CD8-positive, alpha-beta T cell (primary cell): ENCODE measurements at regions of chr4 and their contacts with region 1.

Region 1: DNA sequence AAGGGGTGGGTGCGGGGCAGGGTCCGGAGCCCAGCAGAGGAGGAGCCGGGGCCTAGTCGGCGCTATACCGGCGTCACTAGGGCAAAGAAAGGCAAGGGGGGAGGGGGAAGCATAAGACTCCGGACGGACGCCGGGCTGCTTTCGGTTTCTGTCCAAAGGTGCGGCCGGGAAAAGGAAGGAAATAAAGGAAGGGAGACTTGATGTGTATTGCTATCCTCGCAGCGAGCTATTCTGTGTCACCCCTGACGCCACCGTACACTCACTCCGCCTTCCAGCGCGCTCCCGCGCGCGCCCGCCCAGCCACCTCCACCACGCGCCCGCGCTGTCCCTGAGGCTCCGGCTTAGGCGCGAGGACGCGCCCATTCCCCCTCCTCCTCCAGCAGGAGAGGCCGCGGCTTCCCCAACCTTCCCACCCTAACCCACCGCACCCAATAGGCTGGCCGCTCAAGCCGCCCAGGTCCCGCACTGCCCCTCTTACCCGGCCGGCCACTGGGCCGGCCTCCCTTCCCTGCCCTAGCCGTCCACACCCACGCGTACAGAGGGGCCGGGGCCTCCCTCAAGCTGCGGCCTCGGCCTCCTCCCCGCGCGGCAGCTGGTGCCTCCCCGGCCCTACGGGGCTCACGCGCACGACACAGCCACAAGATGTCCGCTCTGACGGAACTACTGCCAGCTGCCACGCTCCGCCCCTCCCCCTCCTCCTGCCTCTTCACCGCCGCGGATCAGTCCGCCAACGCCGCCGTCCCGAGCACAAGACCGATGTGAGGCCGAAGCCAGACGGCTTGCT is at the start of gene UBE2D3:
- DNase-seq: peak; percentile 90 to 98 (median 95)
- ATAC-seq: peak; percentile 49
- H3K4me3 ChIP-seq: peak within 1 kb of the TSS; percentile 80 to 90
- H3K4me3 Mint-ChIP-seq: no peak within 1 kb of the TSS
- H3K27ac ChIP-seq: peak within 1 kb of the TSS; percentile 99 to 100
- H3K27ac Mint-ChIP-seq: no peak within 1 kb of the TSS
- H3K4me1 ChIP-seq: peaks cover 37% of the 10 kb centered on the region
- H3K4me1 Mint-ChIP-seq: peaks cover 39% of the 10 kb centered on the region
- H3K27me3 ChIP-seq: no peaks in the 10 kb centered on the region
- H3K27me3 Mint-ChIP-seq: no peaks in the 10 kb centered on the region
- CTCF ChIP-seq: no peak
- total RNA-seq, gene UBE2D3: 752 to 758 TPM

Region 2: DNA sequence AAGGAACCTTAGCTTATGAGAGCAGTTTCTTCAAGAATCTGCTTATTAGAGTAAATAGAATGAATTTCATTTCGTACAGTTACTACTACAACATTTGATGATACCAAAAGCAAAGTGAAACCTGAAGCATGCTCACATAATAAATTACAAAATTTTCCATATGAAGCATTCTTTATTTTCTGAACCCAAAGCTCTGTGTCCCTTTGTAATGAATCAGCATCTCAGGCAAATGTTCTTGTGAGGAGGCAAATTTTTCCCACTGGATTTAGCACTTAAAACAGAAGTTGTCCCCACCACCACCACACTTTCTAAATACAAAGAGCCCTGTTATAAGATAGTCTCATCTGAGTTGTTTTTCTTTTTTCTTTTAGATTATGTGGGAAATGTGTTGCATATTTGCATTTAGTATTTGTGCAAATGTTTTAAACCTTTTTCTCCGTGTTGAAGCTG is 396.6 kb before region 1 on chr4:
- CTCF ChIA-PET with region 1: no interaction called
- POLR2A ChIA-PET with region 1: no interaction called
- intact Hi-C with region 1: loop called in 1 of 2 experiments (anchors 1 kb)
- DNase-seq: peak in 1 of 9 experiments; percentile 19
- ATAC-seq: no peak
- H3K4me3 ChIP-seq: peak overlapping the region; percentile 57 to 58
- H3K4me3 Mint-ChIP-seq: peak overlapping the region; percentile 88
- H3K27ac ChIP-seq: peak overlapping the region; percentile 34 to 55
- H3K27ac Mint-ChIP-seq: no peak overlapping the region
- H3K4me1 ChIP-seq: peaks cover 4% of the 10 kb centered on the region
- H3K4me1 Mint-ChIP-seq: peaks cover 8% of the 10 kb centered on the region
- H3K27me3 ChIP-seq: no peaks in the 10 kb centered on the region
- H3K27me3 Mint-ChIP-seq: no peaks in the 10 kb centered on the region
- CTCF ChIP-seq: no peak

Region 3: GRCh38 chr4:102760645-102761295 is 66.3 kb before region 1 on chr4 and contains the start of gene MANBA:
- CTCF ChIA-PET with region 1: interaction called, 9 read pairs
- POLR2A ChIA-PET with region 1: interaction called, 71 read pairs
- intact Hi-C with region 1: loop called (anchors 1 to 2 kb)
- DNase-seq: peak; percentile 67 to 90 (median 84)
- ATAC-seq: peak; percentile 83
- H3K4me3 ChIP-seq: peak within 1 kb of the TSS; percentile 88 to 93
- H3K4me3 Mint-ChIP-seq: peak within 1 kb of the TSS; percentile 96
- H3K27ac ChIP-seq: peak within 1 kb of the TSS; percentile 62 to 65
- H3K27ac Mint-ChIP-seq: peak within 1 kb of the TSS; percentile 94
- H3K4me1 ChIP-seq: peaks cover 10% of the 10 kb centered on the region
- H3K4me1 Mint-ChIP-seq: peaks cover 42% of the 10 kb centered on the region
- H3K27me3 ChIP-seq: no peaks in the 10 kb centered on the region
- H3K27me3 Mint-ChIP-seq: no peaks in the 10 kb centered on the region
- CTCF ChIP-seq: no peak
- total RNA-seq, gene MANBA: 22.5 to 24.1 TPM

Region 4: GRCh38 chr4:102778720-102779119 is 48.4 kb before region 1 on chr4:
- CTCF ChIA-PET with region 1: no interaction called
- POLR2A ChIA-PET with region 1: no interaction called
- intact Hi-C with region 1: no loop called
- DNase-seq: no peak
- ATAC-seq: no peak
- H3K4me3 ChIP-seq: no peak overlapping the region
- H3K4me3 Mint-ChIP-seq: no peak overlapping the region
- H3K27ac ChIP-seq: no peak overlapping the region
- H3K27ac Mint-ChIP-seq: no peak overlapping the region
- H3K4me1 ChIP-seq: no peaks in the 10 kb centered on the region
- H3K4me1 Mint-ChIP-seq: no peaks in the 10 kb centered on the region
- H3K27me3 ChIP-seq: no peaks in the 10 kb centered on the region
- H3K27me3 Mint-ChIP-seq: no peaks in the 10 kb centered on the region
- CTCF ChIP-seq: no peak

Region 5: GRCh38 chr4:102815981-102816380 is 11.1 kb before region 1 on chr4:
- CTCF ChIA-PET with region 1: interaction called, 10 read pairs
- POLR2A ChIA-PET with region 1: interaction called, 51 read pairs
- intact Hi-C with region 1: loop called in 1 of 2 experiments (anchors 1 kb)
- DNase-seq: no peak
- ATAC-seq: no peak
- H3K4me3 ChIP-seq: no peak overlapping the region
- H3K4me3 Mint-ChIP-seq: peak overlapping the region; percentile 48
- H3K27ac ChIP-seq: peak overlapping the region in 1 of 2 experiments; percentile 17
- H3K27ac Mint-ChIP-seq: peak overlapping the region; percentile 87
- H3K4me1 ChIP-seq: peaks cover 97% of the 10 kb centered on the region
- H3K4me1 Mint-ChIP-seq: peaks cover 85% of the 10 kb centered on the region
- H3K27me3 ChIP-seq: no peaks in the 10 kb centered on the region
- H3K27me3 Mint-ChIP-seq: no peaks in the 10 kb centered on the region
- CTCF ChIP-seq: no peak

Region 6: GRCh38 chr4:103019308-103020124 is 192.4 kb after region 1 on chr4 and contains the start of gene SLC9B1:
- CTCF ChIA-PET with region 1: no interaction called
- POLR2A ChIA-PET with region 1: interaction called, 7 read pairs
- intact Hi-C with region 1: loop called (anchors 1 kb)
- DNase-seq: peak; percentile 86 to 96 (median 94)
- ATAC-seq: peak; percentile 92
- H3K4me3 ChIP-seq: peak within 1 kb of the TSS; percentile 70 to 75
- H3K4me3 Mint-ChIP-seq: peak within 1 kb of the TSS; percentile 87
- H3K27ac ChIP-seq: peak within 1 kb of the TSS; percentile 86 to 87
- H3K27ac Mint-ChIP-seq: peak within 1 kb of the TSS; percentile 97
- H3K4me1 ChIP-seq: peaks cover 17% of the 10 kb centered on the region
- H3K4me1 Mint-ChIP-seq: peaks cover 20% of the 10 kb centered on the region
- H3K27me3 ChIP-seq: no peaks in the 10 kb centered on the region
- H3K27me3 Mint-ChIP-seq: no peaks in the 10 kb centered on the region
- CTCF ChIP-seq: no peak
- total RNA-seq, gene SLC9B1: 1.7 to 4.0 TPM